ENCODE measurements at regions of chr1 and their contacts with region 1.

Region 1: GRCh38 chr1:31335007-31335406 is 37.9 kb downstream of the FABP3 start:
- DNase-seq: peak in 3 of 14 experiments; percentile 21 to 27 (median 25)
- ATAC-seq: no peak
- H3K4me3 ChIP-seq: no peak overlapping the region
- H3K4me3 Mint-ChIP-seq: no peak overlapping the region
- H3K27ac ChIP-seq: no peak overlapping the region
- H3K27ac Mint-ChIP-seq: no peak overlapping the region
- H3K4me1 ChIP-seq: no peaks in the 10 kb centered on the region
- H3K4me1 Mint-ChIP-seq: no peaks in the 10 kb centered on the region
- H3K27me3 ChIP-seq: no peaks in the 10 kb centered on the region
- H3K27me3 Mint-ChIP-seq: no peaks in the 10 kb centered on the region
- CTCF ChIP-seq: peak; percentile 30

Region 2: DNA sequence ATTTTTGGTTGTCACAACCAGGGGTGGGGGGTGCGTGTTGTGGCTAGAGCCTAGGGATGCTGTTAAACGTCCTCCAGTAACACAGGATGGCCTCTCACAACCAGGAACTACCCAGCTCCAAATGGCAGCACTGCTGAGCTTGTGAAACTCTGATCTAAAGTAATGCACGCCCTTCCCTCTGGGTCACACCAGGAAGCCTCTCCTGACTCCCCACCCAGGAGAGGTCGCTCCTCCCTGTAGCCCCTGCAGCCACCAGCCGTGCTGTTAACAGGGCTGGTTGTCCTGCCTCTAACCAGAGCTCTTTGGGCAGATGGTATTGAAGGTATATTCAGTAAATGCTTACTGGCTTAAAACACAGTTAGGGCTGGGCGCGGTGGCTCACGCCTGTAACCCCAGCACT is 168.5 kb before region 1 on chr1:
- CTCF ChIA-PET with region 1: no interaction called
- POLR2A ChIA-PET with region 1: no interaction called
- intact Hi-C with region 1: loop called in 1 of 2 experiments (anchors 10 kb)
- DNase-seq: no peak
- ATAC-seq: no peak
- H3K4me3 ChIP-seq: no peak overlapping the region
- H3K4me3 Mint-ChIP-seq: no peak overlapping the region
- H3K27ac ChIP-seq: no peak overlapping the region
- H3K27ac Mint-ChIP-seq: no peak overlapping the region
- H3K4me1 ChIP-seq: peaks cover 10% of the 10 kb centered on the region
- H3K4me1 Mint-ChIP-seq: no peaks in the 10 kb centered on the region
- H3K27me3 ChIP-seq: no peaks in the 10 kb centered on the region
- H3K27me3 Mint-ChIP-seq: peaks cover 9% of the 10 kb centered on the region
- CTCF ChIP-seq: no peak

Region 3: DNA sequence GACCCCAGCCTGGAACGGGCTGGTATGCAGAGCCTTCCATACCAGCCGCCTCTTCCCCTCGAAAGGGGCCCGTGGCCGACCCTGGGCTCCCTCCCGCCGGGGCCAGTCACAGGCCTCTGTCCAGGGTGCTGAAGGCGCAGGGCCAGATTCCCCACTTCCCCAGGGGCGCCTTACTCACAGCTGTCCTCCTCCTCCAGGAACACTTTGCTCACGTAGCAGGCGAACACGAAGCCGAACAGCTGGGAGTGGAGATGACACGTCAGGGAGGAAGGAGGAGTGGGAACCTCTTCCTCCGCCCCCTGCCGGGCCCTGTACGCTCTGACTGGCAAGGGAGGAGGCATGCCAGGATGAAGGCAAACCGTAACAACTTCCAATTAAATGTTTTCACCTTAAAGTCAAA is 152.7 kb before region 1 on chr1:
- CTCF ChIA-PET with region 1: no interaction called
- POLR2A ChIA-PET with region 1: no interaction called
- intact Hi-C with region 1: loop called in 1 of 2 experiments (anchors 5 kb)
- DNase-seq: peak; percentile 16 to 69 (median 38)
- ATAC-seq: peak; percentile 56
- H3K4me3 ChIP-seq: no peak overlapping the region
- H3K4me3 Mint-ChIP-seq: no peak overlapping the region
- H3K27ac ChIP-seq: no peak overlapping the region
- H3K27ac Mint-ChIP-seq: no peak overlapping the region
- H3K4me1 ChIP-seq: peaks cover 12% of the 10 kb centered on the region
- H3K4me1 Mint-ChIP-seq: peaks cover 4% of the 10 kb centered on the region
- H3K27me3 ChIP-seq: peaks cover 33 to 38% of the 10 kb centered on the region in 2 experiments
- H3K27me3 Mint-ChIP-seq: peaks cover 70% of the 10 kb centered on the region
- CTCF ChIP-seq: no peak

Region 4: GRCh38 chr1:31310198-31310597 is 24.8 kb before region 1 on chr1:
- CTCF ChIA-PET with region 1: no interaction called
- POLR2A ChIA-PET with region 1: no interaction called
- intact Hi-C with region 1: no loop called
- DNase-seq: no peak
- ATAC-seq: no peak
- H3K4me3 ChIP-seq: no peak overlapping the region
- H3K4me3 Mint-ChIP-seq: no peak overlapping the region
- H3K27ac ChIP-seq: no peak overlapping the region
- H3K27ac Mint-ChIP-seq: no peak overlapping the region
- H3K4me1 ChIP-seq: no peaks in the 10 kb centered on the region
- H3K4me1 Mint-ChIP-seq: peaks cover 17% of the 10 kb centered on the region
- H3K27me3 ChIP-seq: no peaks in the 10 kb centered on the region
- H3K27me3 Mint-ChIP-seq: no peaks in the 10 kb centered on the region
- CTCF ChIP-seq: no peak